A549 (cell line): ENCODE measurements at regions of chr1 and their contacts with region 1.

Region 1: DNA sequence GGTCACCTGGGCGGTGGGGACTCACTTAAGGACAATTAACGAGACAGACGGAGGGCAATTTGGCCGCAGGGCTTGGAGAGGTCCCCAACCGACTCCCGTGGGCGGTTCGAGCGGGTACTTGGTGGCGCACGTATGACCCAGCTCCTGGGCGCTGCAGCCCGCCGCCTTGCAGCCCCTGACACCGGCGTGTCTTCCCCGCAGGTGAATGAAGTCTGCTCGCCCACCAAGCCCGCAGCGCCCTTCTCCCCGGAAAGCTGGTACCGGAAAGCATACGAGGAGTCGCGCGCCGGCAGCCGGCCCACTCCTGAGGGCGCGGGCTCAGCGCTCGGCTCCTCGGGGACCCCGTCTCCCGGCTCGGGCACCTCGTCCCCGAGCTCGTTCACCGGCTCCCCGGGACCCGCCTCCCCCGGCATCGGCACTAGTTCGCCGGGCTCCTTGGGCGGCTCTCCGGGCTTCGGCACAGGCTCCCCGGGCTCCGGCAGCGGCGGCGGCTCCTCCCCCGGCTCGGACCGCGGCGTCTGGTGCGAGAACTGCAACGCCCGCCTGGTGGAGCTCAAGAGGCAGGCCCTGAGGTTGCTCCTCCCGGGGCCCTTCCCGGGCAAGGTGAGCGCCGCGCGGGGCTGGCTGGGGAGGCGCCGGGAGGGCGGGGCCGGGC is 1.4 kb downstream of the KIF26B start:
- DNase-seq: peak; percentile 81 to 94
- ATAC-seq: peak; percentile 75 to 88
- H3K4me3 ChIP-seq: peak overlapping the region; percentile 64
- H3K27ac ChIP-seq: peak overlapping the region; percentile 52 to 81
- H3K4me1 ChIP-seq: peaks cover 8% of the 10 kb centered on the region; the same call in 1 of the 3 replicates
- CTCF ChIP-seq: peak; percentile 76
- EP300 ChIP-seq: no peak
- POLR2A ChIP-seq: no peak
- RAD21 ChIP-seq: peak; percentile 65 to 83

Region 2: GRCh38 chr1:244757091-244757939 is 398.9 kb before region 1 on chr1:
- CTCF ChIA-PET with region 1: no interaction called
- POLR2A ChIA-PET with region 1: no interaction called
- DNase-seq: no peak
- ATAC-seq: no peak
- H3K4me3 ChIP-seq: no peak overlapping the region
- H3K27ac ChIP-seq: no peak overlapping the region
- H3K4me1 ChIP-seq: no peaks in the 10 kb centered on the region
- CTCF ChIP-seq: no peak
- EP300 ChIP-seq: no peak
- POLR2A ChIP-seq: no peak
- RAD21 ChIP-seq: no peak

Region 3: DNA sequence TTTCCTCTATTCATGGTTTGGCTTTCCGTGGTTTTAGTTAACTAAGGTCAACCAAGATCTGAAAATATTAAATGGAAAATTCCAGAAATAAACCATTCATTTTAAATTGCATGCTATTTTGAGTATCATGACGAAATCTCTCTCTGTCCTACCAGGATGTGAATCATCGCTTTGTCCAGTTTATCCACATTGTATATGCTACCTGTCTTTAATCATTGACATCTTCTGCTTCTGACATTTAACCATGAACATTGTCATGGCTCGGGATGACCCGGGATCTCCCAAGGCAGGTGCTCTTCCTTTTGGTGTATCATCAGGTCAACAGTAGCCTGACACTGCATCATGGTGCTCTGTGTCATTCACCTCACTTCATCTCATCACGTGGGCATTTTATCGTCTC is 166.4 kb before region 1 on chr1:
- CTCF ChIA-PET with region 1: no interaction called
- POLR2A ChIA-PET with region 1: no interaction called
- DNase-seq: peak in 1 of 2 experiments; percentile 37
- ATAC-seq: peak; percentile 52 to 77; a peak in 4 of 6 replicates
- H3K4me3 ChIP-seq: no peak overlapping the region
- H3K27ac ChIP-seq: peak overlapping the region in 1 of 2 experiments; percentile 62; a peak in 3 of 6 replicates
- H3K4me1 ChIP-seq: peaks cover 19% of the 10 kb centered on the region
- CTCF ChIP-seq: no peak
- EP300 ChIP-seq: no peak
- POLR2A ChIP-seq: no peak
- RAD21 ChIP-seq: no peak

Region 4: DNA sequence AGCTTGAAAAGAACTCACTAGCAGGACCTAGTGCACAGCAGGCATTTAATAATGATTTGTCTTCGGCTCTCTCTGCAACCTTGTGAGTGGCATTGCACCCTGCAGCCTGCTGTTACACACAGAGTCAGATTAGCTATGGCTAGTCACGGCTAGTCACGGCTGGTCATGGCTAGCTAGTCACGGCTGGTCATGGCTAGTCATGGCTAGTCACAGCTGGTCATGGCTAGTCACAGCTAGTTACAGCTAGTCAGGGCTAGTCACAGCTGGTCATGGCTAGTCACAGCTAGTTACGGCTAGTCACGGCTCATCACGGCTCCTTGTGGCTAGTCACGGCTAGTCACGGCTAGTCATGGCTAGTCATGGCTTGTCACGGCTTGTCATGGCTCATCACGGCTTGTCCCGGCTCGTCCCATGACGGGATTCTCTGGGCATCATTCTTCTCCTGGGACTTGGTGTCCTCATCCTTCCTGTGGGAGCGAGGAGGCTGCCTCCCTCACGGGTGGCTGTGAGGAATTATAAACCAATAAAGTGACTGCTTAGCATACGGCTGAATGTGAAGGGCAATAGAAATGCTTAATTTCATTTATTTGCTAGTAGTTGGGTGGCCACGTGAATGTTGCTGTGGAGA is 13.9 kb before region 1 on chr1:
- CTCF ChIA-PET with region 1: interaction called, 46 read pairs
- POLR2A ChIA-PET with region 1: no interaction called
- DNase-seq: no peak
- ATAC-seq: peak in 1 of 2 experiments; percentile 42; a peak in 1 of 6 replicates
- H3K4me3 ChIP-seq: no peak overlapping the region
- H3K27ac ChIP-seq: no peak overlapping the region
- H3K4me1 ChIP-seq: no peaks in the 10 kb centered on the region
- CTCF ChIP-seq: no peak
- EP300 ChIP-seq: no peak
- POLR2A ChIP-seq: no peak
- RAD21 ChIP-seq: no peak

Region 5: GRCh38 chr1:245166471-245166885 is 10.3 kb after region 1 on chr1:
- CTCF ChIA-PET with region 1: interaction called, 32 read pairs
- POLR2A ChIA-PET with region 1: no interaction called
- DNase-seq: no peak
- ATAC-seq: no peak
- H3K4me3 ChIP-seq: no peak overlapping the region
- H3K27ac ChIP-seq: no peak overlapping the region
- H3K4me1 ChIP-seq: no peaks in the 10 kb centered on the region
- CTCF ChIP-seq: no peak
- EP300 ChIP-seq: no peak
- POLR2A ChIP-seq: no peak
- RAD21 ChIP-seq: no peak

Region 6: GRCh38 chr1:246002725-246003441 is 846.7 kb after region 1 on chr1:
- CTCF ChIA-PET with region 1: interaction called, 29 read pairs
- POLR2A ChIA-PET with region 1: no interaction called
- DNase-seq: peak; percentile 69 to 81
- ATAC-seq: peak; percentile 83 to 93
- H3K4me3 ChIP-seq: no peak overlapping the region
- H3K27ac ChIP-seq: no peak overlapping the region
- H3K4me1 ChIP-seq: no peaks in the 10 kb centered on the region
- CTCF ChIP-seq: peak; percentile 92
- EP300 ChIP-seq: no peak
- POLR2A ChIP-seq: no peak
- RAD21 ChIP-seq: peak; percentile 89 to 93

Region 7: DNA sequence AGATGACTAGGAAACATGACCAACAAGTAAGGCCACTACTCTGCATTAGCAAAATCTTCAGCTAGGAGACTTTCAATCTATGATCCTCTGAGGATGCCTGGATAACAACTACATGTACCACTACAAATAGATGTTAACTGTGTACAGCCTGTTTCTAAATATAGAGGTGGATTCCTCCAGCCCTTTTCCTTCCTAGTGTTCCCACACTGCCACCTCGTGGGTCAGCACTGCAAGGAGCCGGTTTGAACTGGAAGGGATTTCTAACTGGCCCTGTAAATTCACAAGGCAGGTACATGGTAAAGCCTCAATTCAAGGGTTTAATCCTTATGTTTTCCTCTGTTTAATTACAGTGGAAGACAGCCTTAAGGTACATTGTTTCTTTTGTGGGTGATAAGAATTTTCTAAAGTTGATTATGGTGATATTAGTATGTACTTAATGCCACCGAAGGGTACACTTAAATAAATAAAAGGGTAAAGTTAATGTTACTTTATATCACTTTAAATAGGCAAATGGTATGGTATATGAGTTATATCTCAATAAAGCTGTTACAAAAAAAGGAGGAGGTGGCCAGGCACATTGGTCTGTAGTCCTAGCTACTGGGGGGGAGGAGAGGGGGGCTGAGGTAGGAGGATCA is 1336.5 kb after region 1 on chr1:
- CTCF ChIA-PET with region 1: interaction called, 44 read pairs
- POLR2A ChIA-PET with region 1: no interaction called
- DNase-seq: peak; percentile 65 to 68
- ATAC-seq: peak; percentile 92 to 96
- H3K4me3 ChIP-seq: no peak overlapping the region
- H3K27ac ChIP-seq: no peak overlapping the region
- H3K4me1 ChIP-seq: no peaks in the 10 kb centered on the region
- CTCF ChIP-seq: peak; percentile 90
- EP300 ChIP-seq: no peak
- POLR2A ChIP-seq: no peak
- RAD21 ChIP-seq: peak; percentile 81 to 87